Motor neuron (in vitro differentiated cells): ENCODE measurements at regions of chr11 and their contacts with region 1.

Region 1: GRCh38 chr11:102367364-102367763 is 20.4 kb downstream of the BIRC2 start:
- ATAC-seq: peak in 1 of 8 experiments; percentile 72
- H3K4me3 ChIP-seq: no peak overlapping the region
- H3K27ac ChIP-seq: no peak overlapping the region
- H3K4me1 ChIP-seq: no peaks in the 10 kb centered on the region

Region 2: DNA sequence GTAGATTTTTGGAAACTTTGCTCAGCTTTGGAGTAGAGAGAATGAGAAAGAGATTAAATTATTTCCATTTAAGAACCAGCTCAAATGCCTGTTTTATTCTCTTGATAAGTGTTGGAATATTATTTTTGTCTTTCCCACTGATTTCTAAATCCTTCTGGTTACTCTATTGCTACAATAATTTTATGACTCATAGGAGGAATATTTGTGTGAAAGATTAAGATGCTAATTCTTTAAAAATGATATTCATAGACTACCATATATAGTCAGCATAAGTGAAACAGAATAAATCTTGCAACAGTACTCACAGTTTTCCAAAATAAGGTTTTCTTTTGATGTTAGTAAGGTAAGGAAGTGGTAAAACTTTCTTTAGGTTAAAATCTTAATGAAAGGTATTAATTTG is 196.3 kb before region 1 on chr11:
- in situ Hi-C with region 1: no loop called
- ATAC-seq: peak in 3 of 8 experiments; percentile 75 to 93 (median 76)
- H3K4me3 ChIP-seq: no peak overlapping the region
- H3K27ac ChIP-seq: no peak overlapping the region
- H3K4me1 ChIP-seq: no peaks in the 10 kb centered on the region

Region 3: DNA sequence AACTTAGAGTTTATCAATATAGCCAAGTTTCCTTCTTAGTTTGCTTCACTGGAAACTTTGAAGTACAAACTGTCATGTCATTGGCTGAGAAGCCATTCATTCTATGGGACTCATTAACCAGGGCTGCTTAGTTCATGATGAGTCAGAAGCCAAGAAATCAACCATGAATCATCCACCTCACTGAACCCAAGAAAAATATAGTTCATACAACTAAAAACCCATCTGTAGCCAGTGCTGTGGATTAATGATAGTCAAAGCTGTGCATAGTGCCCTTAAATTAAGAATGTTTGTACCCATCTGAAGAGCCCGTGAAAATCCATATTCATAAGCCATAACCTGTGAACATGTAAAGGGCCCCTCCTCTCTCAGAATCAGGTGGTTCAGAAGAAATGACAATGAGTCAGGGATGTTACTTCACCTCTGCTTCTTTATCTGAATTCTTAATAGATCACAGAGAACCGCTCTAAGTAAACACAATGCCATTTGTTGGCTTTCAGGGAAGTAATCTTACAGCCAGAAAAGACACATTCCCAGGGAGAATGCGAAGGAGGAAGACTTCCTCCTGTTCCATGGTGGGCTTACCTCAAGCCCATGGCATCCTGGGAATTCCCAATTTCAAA is 232.4 kb after region 1 on chr11:
- in situ Hi-C with region 1: loop called in 1 of 9 experiments (anchors 25 kb)
- ATAC-seq: peak in 7 of 8 experiments; percentile 88 to 98 (median 95)
- H3K4me3 ChIP-seq: no peak overlapping the region
- H3K27ac ChIP-seq: no peak overlapping the region
- H3K4me1 ChIP-seq: peaks cover 0 to 5% of the 10 kb centered on the region in 2 donors